IMR-90 (cell line): ENCODE measurements at regions of chr5 and their contacts with region 1.

Region 1: GRCh38 chr5:17118631-17119030 is 98.8 kb upstream of the BASP1 start:
- DNase-seq: peak; percentile 99
- ATAC-seq: peak; percentile 90
- H3K4me3 ChIP-seq: no peak overlapping the region
- H3K27ac ChIP-seq: peak overlapping the region; percentile 47
- H3K4me1 ChIP-seq: peaks cover 10% of the 10 kb centered on the region
- H3K27me3 ChIP-seq: no peaks in the 10 kb centered on the region
- CTCF ChIP-seq: no peak
- POLR2A ChIP-seq: peak; percentile 90; the same call in 1 of the 2 replicates
- RAD21 ChIP-seq: no peak

Region 2: GRCh38 chr5:17024686-17025180 is 93.9 kb before region 1 on chr5:
- CTCF ChIA-PET with region 1: no interaction called
- POLR2A ChIA-PET with region 1: no interaction called
- dilution Hi-C with region 1: no loop called
- in situ Hi-C with region 1: no loop called
- intact Hi-C with region 1: loop called (anchors 5 kb)
- DNase-seq: peak; percentile 85
- ATAC-seq: peak; percentile 76
- H3K4me3 ChIP-seq: no peak overlapping the region
- H3K27ac ChIP-seq: peak overlapping the region; percentile 90
- H3K4me1 ChIP-seq: peaks cover 17% of the 10 kb centered on the region
- H3K27me3 ChIP-seq: no peaks in the 10 kb centered on the region
- CTCF ChIP-seq: no peak
- POLR2A ChIP-seq: no peak
- RAD21 ChIP-seq: no peak

Region 3: GRCh38 chr5:17087035-17087434 is 31.6 kb before region 1 on chr5:
- CTCF ChIA-PET with region 1: no interaction called
- POLR2A ChIA-PET with region 1: no interaction called
- dilution Hi-C with region 1: no loop called
- in situ Hi-C with region 1: no loop called
- intact Hi-C with region 1: no loop called
- DNase-seq: peak; percentile 23
- ATAC-seq: no peak
- H3K4me3 ChIP-seq: no peak overlapping the region
- H3K27ac ChIP-seq: no peak overlapping the region
- H3K4me1 ChIP-seq: no peaks in the 10 kb centered on the region
- H3K27me3 ChIP-seq: no peaks in the 10 kb centered on the region
- CTCF ChIP-seq: no peak
- POLR2A ChIP-seq: no peak
- RAD21 ChIP-seq: no peak

Region 4: DNA sequence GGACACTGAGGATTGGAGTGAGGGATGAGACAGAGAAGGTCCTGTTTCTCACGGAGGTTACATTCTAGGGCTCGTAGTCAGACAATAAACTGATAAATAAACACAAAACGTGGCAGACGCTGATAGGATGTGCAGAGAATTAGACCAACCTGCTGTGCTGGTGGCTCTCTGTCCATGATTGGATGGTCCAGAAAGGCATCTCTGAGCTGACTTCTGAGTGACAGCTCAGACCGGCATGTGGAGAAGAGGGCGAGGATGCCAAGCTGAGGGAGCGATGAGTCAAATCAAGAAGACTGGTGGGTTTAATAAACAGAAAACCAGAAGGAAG is 247.1 kb after region 1 on chr5:
- CTCF ChIA-PET with region 1: no interaction called
- POLR2A ChIA-PET with region 1: no interaction called
- dilution Hi-C with region 1: no loop called
- in situ Hi-C with region 1: no loop called
- intact Hi-C with region 1: no loop called
- DNase-seq: peak; percentile 89
- ATAC-seq: peak; percentile 95
- H3K4me3 ChIP-seq: no peak overlapping the region
- H3K27ac ChIP-seq: peak overlapping the region; percentile 48; the same call in 1 of the 2 replicates
- H3K4me1 ChIP-seq: peaks cover 6% of the 10 kb centered on the region
- H3K27me3 ChIP-seq: no peaks in the 10 kb centered on the region
- CTCF ChIP-seq: no peak
- POLR2A ChIP-seq: no peak
- RAD21 ChIP-seq: no peak